IMR-90 (cell line): ENCODE measurements at regions of chr3 and their contacts with region 1.

Region 1: DNA sequence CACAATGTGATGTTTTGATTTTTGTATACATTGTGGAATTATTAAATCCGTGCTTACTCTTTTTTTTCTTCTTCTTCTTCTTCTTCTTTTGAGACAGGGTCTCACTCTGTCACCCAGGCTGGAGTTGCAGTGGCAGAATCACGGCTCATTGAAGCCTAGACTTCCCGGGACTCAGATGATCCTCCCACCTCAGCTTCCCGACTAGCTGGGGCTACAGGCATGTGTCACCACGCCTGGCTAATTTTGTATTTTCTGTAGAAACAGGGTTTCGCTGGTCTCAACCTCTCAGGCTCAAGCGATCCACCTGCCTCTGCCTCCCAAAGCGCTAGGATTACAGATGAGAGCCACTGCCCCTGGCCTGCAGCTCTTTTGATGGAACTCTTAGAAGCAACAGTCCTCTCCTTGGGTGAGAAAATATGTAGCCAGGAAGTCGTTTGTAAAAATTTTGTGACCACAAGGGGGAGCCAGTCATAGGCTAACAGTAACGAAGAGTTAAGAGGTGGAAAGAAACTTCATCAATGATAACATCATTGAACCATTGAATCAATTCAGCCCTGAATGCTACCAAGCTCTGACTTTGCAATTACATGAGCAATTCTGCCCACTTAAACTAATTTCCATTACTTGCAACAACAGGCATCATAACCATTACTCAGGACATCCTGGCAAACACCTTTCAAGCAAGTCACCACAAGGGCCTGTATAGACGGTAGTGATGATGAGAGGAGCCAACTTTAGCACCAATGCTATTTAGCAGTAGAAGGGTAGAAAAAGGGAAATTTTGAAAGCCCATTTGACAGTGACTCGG is 16.7 kb upstream of the CMTM7 start:
- DNase-seq: peak; percentile 74
- ATAC-seq: peak; percentile 73
- H3K4me3 ChIP-seq: no peak overlapping the region
- H3K27ac ChIP-seq: no peak overlapping the region
- H3K4me1 ChIP-seq: no peaks in the 10 kb centered on the region; the same call in 1 of the 2 replicates
- H3K27me3 ChIP-seq: peaks cover 9% of the 10 kb centered on the region
- CTCF ChIP-seq: peak; percentile 66
- POLR2A ChIP-seq: no peak
- RAD21 ChIP-seq: peak; percentile 57

Region 2: GRCh38 chr3:32467333-32468070 is 92.5 kb after region 1 on chr3:
- CTCF ChIA-PET with region 1: interaction called, 13 read pairs
- POLR2A ChIA-PET with region 1: no interaction called
- dilution Hi-C with region 1: no loop called
- in situ Hi-C with region 1: no loop called
- intact Hi-C with region 1: loop called (anchors 1 kb)
- DNase-seq: peak; percentile 52
- ATAC-seq: peak; percentile 76
- H3K4me3 ChIP-seq: no peak overlapping the region
- H3K27ac ChIP-seq: no peak overlapping the region
- H3K4me1 ChIP-seq: peaks cover 11% of the 10 kb centered on the region
- H3K27me3 ChIP-seq: no peaks in the 10 kb centered on the region
- CTCF ChIP-seq: peak; percentile 92
- POLR2A ChIP-seq: no peak
- RAD21 ChIP-seq: peak; percentile 92

Region 3: DNA sequence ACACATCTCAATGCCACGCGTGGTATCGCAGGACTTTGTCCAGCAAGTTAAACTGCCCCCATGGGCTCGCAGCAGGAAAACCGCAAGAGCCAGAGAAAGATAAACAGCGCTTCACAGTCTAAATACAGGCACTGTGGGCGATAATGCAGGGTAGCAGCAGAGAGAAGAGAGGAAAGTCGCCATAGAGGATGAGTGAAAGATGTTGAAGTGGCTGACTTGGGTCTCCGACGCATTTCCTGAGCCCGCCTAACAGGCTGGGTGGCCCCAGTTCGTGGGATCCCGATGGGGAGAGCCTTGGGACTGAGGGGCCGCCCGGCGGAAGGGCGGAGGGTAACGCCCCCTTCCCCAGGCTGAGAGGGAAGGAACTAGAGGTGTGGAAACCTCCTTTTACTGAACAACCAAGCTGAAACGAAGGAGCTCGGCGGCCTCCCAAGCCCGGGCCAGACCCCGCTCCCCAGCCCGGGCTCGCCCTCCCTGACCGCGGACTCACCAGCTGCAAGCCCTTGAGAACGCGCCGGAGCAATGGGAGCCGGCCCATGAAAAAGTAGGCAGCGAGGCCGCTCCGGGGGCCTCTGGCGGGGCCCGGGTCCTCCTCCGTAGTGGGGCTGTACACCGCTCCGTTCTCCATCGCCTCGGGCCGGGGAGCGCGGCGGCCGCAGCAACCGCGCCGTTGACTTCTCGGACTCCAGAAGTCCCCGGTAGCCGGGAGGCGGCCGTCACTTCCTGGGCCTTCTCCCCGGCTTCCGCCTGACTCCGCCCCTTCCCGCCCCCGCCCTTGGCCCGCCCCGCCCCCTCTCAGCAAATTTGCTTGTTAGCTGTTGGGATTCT is 127.3 kb after region 1 on chr3 and contains the start of gene CMTM6:
- CTCF ChIA-PET with region 1: no interaction called
- POLR2A ChIA-PET with region 1: no interaction called
- dilution Hi-C with region 1: no loop called
- in situ Hi-C with region 1: no loop called
- intact Hi-C with region 1: loop called (anchors 1 kb)
- DNase-seq: peak; percentile 80
- ATAC-seq: peak; percentile 88
- H3K4me3 ChIP-seq: peak within 1 kb of the TSS; percentile 59
- H3K27ac ChIP-seq: peak within 1 kb of the TSS; percentile 88
- H3K4me1 ChIP-seq: peaks cover 3% of the 10 kb centered on the region; the same call in 1 of the 2 replicates
- H3K27me3 ChIP-seq: no peaks in the 10 kb centered on the region
- CTCF ChIP-seq: no peak
- POLR2A ChIP-seq: peak; percentile 79; the same call in 1 of the 2 replicates
- RAD21 ChIP-seq: 0 out of 2 replicates have a peak, but pooled peaks have one; percentile 7
- total RNA-seq, gene CMTM6: 36.6 and 85.0 TPM in 2 replicates